ENCODE measurements at regions of chr3 and their contacts with region 1.

Region 1: GRCh38 chr3:107522510-107523288 is at the start of gene BBX:
- DNase-seq: peak; percentile 88
- H3K4me3 Mint-ChIP-seq: peak within 1 kb of the TSS; percentile 92
- H3K27ac Mint-ChIP-seq: peak within 1 kb of the TSS; percentile 96
- H3K4me1 Mint-ChIP-seq: peaks cover 32% of the 10 kb centered on the region
- H3K27me3 Mint-ChIP-seq: peaks cover 4% of the 10 kb centered on the region
- total RNA-seq, gene BBX: 38.1 and 45.1 TPM in 2 replicates

Region 2: DNA sequence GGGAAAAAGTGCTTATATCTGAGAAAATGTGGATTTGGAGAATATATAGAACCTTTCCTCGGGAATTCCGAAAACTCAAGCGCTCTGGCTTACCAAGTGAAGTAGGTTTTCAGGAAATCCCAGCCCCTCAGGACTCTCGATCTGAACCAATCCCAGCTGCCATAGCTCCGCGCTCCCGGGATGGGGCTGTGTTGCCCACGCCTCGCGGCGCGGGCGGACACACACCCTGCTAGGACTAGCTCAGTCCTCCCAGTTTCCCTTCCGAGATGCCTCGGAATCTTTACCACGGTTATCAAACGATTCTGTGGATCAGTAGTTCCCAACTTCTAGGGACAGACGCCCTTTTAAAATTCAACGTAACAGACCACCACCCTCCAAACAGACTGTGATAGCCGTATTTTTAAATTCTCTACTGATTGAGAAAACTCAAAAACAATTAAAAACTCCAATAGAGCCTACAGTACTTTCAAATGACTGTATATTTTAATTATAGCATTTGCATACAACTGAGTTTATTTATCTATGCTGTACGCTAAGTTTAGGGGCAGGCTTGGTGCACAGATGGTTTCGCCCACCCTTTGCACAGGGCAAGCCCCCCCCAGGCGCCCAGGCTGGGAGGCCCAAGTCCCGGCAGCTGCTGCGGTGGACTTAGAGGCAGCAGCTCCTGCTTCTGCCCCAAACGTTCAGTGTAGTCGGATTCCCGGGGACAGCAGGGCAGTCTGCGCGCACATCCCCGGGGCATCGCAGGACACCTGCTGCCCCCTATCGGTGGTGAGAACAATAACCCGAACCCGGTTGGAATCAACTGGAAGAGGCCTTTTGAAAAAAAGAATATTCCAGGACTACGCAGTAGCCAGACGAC is 93.1 kb before region 1 on chr3:
- intact Hi-C with region 1: loop called (anchors 1 kb)
- DNase-seq: peak; percentile 44
- H3K4me3 Mint-ChIP-seq: peak overlapping the region; percentile 82
- H3K27ac Mint-ChIP-seq: peak overlapping the region; percentile 44
- H3K4me1 Mint-ChIP-seq: peaks cover 21% of the 10 kb centered on the region
- H3K27me3 Mint-ChIP-seq: peaks cover 45% of the 10 kb centered on the region

Region 3: DNA sequence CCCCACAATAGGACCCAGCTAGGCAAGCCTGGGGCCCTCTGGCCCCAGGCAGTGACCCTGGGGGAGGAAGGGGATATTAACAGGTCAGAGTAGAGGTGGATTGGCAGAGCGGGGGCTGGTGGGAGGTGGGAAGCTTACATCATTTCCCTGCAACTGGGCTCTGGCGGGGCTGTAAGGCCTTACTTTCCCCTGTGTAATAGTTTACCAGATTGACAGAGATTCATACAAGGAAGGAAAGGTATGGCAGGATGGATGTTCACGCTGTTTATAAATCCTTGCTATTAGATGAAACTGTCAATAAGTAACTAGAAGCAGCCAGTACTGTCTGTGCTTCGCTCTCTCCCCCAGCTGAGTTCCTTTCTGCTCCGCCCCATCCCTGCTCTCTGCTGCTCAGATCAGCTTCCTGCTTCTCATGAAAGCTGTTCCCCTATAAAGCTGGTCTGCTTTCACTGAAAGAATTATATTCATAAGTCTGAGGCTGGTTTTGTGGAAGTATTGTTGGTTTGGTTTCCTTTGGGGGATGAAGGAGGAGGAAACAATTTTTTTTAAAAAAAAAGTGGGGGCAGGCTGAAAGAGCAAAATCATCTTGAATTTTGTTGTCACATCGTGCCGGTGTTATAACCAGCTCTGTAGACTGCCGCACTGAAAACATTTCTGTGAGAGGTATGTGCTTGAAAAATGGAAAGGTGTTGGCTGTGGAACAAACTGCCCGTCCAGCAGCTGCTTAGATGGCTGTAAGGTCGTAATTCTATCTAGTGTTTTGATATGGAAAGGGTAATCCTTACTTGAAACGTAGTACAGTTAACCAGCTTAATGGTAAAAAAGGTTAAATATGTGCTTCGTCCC is 76.5 kb after region 1 on chr3:
- intact Hi-C with region 1: loop called (anchors 2 kb)
- DNase-seq: peak; percentile 29
- H3K4me3 Mint-ChIP-seq: peak overlapping the region; percentile 89
- H3K27ac Mint-ChIP-seq: peak overlapping the region; percentile 91
- H3K4me1 Mint-ChIP-seq: peaks cover 48% of the 10 kb centered on the region
- H3K27me3 Mint-ChIP-seq: no peaks in the 10 kb centered on the region

Measured in activated T-helper 1 cell treated with anti-CD3 and anti-CD28 coated beads, Interleukin-12 subunit alpha, Interleukin-12 subunit beta, Interleukin-2, Interleukin-4 antibody, amounts not matched to agents 30 ng/mL and 10 ng/mL and 1 ng/mL, durations not matched to agents 14 hours and 24 hours and 36 hours (primary cell).